T-cell (primary cell): ENCODE measurements at regions of chr2 and their contacts with region 1.

Region 1: DNA sequence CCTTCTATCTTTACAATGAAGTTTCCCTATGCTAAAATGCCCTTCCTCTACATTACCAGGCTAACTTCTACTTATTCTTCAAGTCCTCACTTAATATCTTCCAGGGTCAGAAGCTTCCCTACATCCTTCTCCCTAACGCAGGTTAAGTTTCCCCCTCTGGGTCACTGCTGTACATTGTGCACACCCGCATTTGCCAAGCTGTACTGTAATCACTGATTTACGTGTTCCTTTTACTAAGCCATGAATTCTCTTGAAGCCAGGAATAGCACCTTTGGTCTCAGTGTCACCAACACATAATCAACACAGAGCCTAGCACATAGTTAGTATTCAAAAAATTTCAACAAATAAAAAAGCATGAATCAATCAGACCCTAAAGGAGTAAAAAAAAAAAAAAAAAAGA is 22.3 kb downstream of the ACVR1 start:
- DNase-seq: no peak
- ATAC-seq: no peak
- H3K4me3 ChIP-seq: no peak overlapping the region
- H3K4me3 Mint-ChIP-seq: no peak overlapping the region
- H3K27ac ChIP-seq: no peak overlapping the region
- H3K27ac Mint-ChIP-seq: no peak overlapping the region
- H3K4me1 ChIP-seq: no peaks in the 10 kb centered on the region
- H3K4me1 Mint-ChIP-seq: peaks cover 17 to 34% (median 21%) of the 10 kb centered on the region in 3 donors
- H3K27me3 ChIP-seq: no peaks in the 10 kb centered on the region
- H3K27me3 Mint-ChIP-seq: no peaks in the 10 kb centered on the region

Region 2: GRCh38 chr2:157509744-157510143 is 344.1 kb before region 1 on chr2:
- CTCF ChIA-PET with region 1: interaction called in 1 of 2 experiments, 14 read pairs
- POLR2A ChIA-PET with region 1: no interaction called
- DNase-seq: no peak
- ATAC-seq: no peak
- H3K4me3 ChIP-seq: no peak overlapping the region
- H3K4me3 Mint-ChIP-seq: no peak overlapping the region
- H3K27ac ChIP-seq: no peak overlapping the region
- H3K27ac Mint-ChIP-seq: no peak overlapping the region
- H3K4me1 ChIP-seq: no peaks in the 10 kb centered on the region
- H3K4me1 Mint-ChIP-seq: peaks cover 0 to 7% (median 3%) of the 10 kb centered on the region in 3 donors
- H3K27me3 ChIP-seq: no peaks in the 10 kb centered on the region
- H3K27me3 Mint-ChIP-seq: peaks cover 20 to 25% of the 10 kb centered on the region in 2 donors

Region 3: GRCh38 chr2:157843081-157843480 is 10.7 kb before region 1 on chr2:
- CTCF ChIA-PET with region 1: no interaction called
- POLR2A ChIA-PET with region 1: no interaction called
- DNase-seq: no peak
- ATAC-seq: no peak
- H3K4me3 ChIP-seq: no peak overlapping the region
- H3K4me3 Mint-ChIP-seq: no peak overlapping the region
- H3K27ac ChIP-seq: no peak overlapping the region
- H3K27ac Mint-ChIP-seq: no peak overlapping the region
- H3K4me1 ChIP-seq: peaks cover 3 to 5% of the 10 kb centered on the region in 2 experiments
- H3K4me1 Mint-ChIP-seq: peaks cover 43 to 48% (median 47%) of the 10 kb centered on the region in 3 donors
- H3K27me3 ChIP-seq: no peaks in the 10 kb centered on the region
- H3K27me3 Mint-ChIP-seq: no peaks in the 10 kb centered on the region

Region 4: DNA sequence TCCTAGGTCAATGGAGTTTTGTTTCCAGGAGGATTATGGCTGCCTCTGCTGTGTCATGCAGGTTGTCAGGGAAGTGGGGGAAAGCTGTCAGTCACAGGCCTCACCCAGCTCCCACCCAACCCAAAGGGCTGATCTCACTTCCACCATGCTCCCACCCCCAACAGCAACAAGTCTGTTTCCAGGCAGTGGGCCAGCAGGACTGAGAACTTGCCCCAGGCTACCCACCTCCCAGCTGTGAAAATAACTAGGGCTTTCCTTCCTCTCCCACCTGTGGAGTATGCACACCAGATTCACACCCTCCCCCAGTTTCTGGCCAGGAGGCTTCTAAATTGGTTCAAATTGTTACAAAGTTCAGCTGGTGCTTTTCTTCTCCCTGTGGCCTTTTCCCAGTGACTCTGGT is 117.9 kb after region 1 on chr2:
- CTCF ChIA-PET with region 1: no interaction called
- POLR2A ChIA-PET with region 1: no interaction called
- DNase-seq: no peak
- ATAC-seq: no peak
- H3K4me3 ChIP-seq: no peak overlapping the region
- H3K4me3 Mint-ChIP-seq: no peak overlapping the region
- H3K27ac ChIP-seq: no peak overlapping the region
- H3K27ac Mint-ChIP-seq: no peak overlapping the region
- H3K4me1 ChIP-seq: no peaks in the 10 kb centered on the region
- H3K4me1 Mint-ChIP-seq: no peaks in the 10 kb centered on the region
- H3K27me3 ChIP-seq: peaks cover 0 to 4% of the 10 kb centered on the region in 2 experiments
- H3K27me3 Mint-ChIP-seq: no peaks in the 10 kb centered on the region

Region 5: DNA sequence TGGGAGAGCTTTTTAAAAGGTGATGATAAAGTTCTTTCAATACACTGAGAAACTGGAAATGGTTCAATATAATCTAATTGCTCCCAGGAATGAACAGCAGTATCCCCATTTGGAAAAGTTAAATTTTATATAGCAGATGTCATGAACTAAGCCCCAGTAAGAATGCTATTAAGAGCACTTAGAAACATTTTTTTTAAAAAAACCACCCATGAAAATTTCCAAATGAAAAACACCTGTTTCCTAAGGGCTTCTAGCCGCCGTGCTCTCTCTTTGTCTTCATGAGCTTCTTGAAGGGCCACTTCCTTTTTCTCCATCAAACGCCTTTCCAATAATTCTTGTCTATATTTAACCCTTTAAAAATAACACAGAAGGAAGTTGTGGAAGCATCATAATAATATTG is 324.8 kb after region 1 on chr2:
- CTCF ChIA-PET with region 1: no interaction called
- POLR2A ChIA-PET with region 1: no interaction called
- DNase-seq: no peak
- ATAC-seq: no peak
- H3K4me3 ChIP-seq: no peak overlapping the region
- H3K4me3 Mint-ChIP-seq: no peak overlapping the region
- H3K27ac ChIP-seq: no peak overlapping the region
- H3K27ac Mint-ChIP-seq: no peak overlapping the region
- H3K4me1 ChIP-seq: no peaks in the 10 kb centered on the region
- H3K4me1 Mint-ChIP-seq: no peaks in the 10 kb centered on the region
- H3K27me3 ChIP-seq: peaks cover 0 to 4% of the 10 kb centered on the region in 2 experiments
- H3K27me3 Mint-ChIP-seq: peaks cover 36% of the 10 kb centered on the region in 2 donors